Heart left ventricle (tissue), 16 donors: ENCODE measurements at regions of chr9 and their contacts with region 1.

Region 1: DNA sequence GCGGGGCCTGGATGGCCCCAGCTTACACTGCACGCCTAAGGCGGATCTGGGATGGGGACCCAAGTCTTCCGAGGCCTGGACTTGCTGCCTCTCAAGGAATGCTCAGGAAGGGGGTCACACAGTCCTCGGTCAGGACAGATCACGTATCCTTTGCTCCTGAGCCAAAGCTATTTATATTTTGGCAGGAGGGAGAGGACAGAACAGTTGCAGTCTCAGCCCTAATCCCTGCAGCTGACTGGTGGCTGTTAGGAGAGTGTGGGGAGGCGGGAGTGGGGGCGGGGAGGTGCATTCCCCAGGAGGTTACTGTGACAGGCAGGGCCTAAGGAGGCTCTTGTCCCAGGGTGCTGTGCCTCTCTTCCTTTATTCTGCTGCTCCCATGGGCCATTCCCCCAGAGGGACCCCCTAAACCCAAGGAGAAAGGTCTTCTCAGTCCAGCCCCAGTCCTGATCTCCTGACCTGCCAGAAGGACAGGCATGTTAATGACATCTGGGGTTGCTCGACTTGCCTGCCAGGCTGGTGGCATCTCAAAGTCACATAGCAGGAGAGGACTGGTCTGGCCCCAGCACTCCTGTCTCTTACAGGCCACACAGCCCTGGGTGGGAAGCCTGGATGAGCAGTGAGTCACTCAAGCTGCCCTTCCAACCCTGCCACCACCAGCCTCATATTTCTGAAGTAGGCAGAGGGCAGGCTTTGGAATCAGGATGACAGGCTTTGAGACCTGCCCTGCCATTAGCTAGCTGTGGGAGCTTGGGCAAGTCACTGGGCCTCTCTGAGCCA is 51.9 kb downstream of the COL27A1 start:
- DNase-seq: peak; percentile 75 to 86 (median 79)
- ATAC-seq: peak; percentile 89 to 97 (median 91)
- H3K4me3 ChIP-seq: no peak overlapping the region
- H3K27ac ChIP-seq: peak overlapping the region; percentile 35 to 94 (median 81)
- H3K4me1 ChIP-seq: peaks cover 4 to 47% (median 28%) of the 10 kb centered on the region in 12 donors
- H3K27me3 ChIP-seq: no peaks in the 10 kb centered on the region
- CTCF ChIP-seq: no peak
- POLR2A ChIP-seq: no peak

Region 2: DNA sequence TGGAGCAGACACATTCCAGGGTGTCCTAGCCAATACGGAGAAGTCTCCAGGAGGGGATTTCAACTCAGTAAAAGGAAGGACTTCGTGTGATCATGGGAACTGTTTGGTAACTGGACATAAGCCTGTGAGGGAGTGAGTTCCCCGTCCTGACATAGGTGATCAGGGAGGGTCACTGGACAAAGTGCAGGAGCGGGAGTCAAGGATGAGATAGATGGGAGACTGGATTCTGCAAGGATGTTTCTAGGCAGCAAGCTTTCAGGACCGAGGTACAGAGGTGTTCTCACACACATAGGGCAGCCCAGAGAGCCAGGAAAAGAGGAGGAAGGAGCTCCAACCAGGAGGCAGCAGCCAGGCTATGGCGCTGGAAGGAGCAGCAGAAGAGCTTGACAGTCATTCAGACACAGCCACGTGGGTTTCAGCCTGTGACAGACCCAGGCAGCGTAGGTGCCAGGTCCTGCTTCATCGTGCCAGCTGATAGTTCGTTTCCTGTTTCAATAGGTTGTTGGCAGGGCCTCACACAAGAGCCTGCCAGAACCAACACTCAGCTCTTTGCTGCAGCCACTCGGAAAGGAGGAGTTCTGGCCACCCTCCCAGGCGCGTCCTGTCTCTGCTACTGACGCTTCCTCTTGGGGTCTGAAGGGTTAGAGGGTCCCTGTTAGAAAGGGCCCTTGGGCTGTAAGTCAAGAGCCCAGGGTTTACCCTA is 213.2 kb before region 1 on chr9:
- intact Hi-C with region 1: no loop called
- DNase-seq: peak; percentile 86 to 93 (median 86)
- ATAC-seq: peak; percentile 89 to 92 (median 90)
- H3K4me3 ChIP-seq: no peak overlapping the region
- H3K27ac ChIP-seq: peak overlapping the region in 2 of 12 donors; percentile 34 to 56
- H3K4me1 ChIP-seq: peaks cover 8 to 61% (median 38%) of the 10 kb centered on the region in 12 donors
- H3K27me3 ChIP-seq: no peaks in the 10 kb centered on the region
- CTCF ChIP-seq: no peak
- POLR2A ChIP-seq: no peak

Region 3: DNA sequence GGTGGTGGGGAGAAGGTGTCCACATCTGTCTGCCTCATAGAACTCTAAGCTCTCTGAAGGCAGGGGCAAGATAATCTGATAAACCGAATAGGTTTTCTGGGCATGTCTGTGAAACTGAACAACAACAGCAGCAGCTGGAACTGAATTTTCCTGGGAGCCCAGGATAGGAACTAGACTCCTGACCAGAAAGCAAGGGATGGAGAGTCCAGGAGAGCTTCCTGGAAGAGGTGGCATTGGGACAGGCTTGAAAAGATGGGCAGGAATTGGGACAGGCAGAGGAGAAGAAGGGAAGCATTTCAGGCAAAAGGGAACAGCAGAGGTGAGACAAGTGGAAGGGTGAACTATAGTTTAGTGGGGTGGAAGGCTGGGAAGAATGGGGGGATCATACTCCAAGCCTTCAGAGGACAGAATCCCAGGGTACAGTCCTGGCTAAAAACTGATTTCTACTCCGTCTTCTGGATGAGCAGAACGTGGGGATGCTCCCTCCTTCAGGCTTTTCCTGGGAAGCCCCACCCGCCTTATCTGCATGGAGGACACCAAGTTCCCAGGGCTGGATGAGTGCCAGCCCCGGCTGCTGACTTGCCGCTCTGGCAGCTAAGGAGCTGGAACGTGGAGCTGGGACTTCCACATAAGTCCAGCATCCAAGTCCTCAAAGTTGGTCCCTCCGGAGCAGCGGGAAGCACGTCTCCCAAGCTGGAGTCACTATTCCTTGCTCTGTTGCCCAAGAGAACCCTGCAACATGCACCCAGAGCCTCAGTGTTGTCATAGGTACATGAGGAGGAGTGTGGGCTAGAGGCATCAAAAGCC is 94.2 kb before region 1 on chr9:
- intact Hi-C with region 1: no loop called
- DNase-seq: peak; percentile 76 to 92 (median 90)
- ATAC-seq: peak; percentile 71 to 80 (median 75)
- H3K4me3 ChIP-seq: no peak overlapping the region
- H3K27ac ChIP-seq: peak overlapping the region in 9 of 12 donors; percentile 7 to 64 (median 41)
- H3K4me1 ChIP-seq: peaks cover 0 to 20% (median 12%) of the 10 kb centered on the region in 12 donors
- H3K27me3 ChIP-seq: peaks cover 0 to 7% (median 0%) of the 10 kb centered on the region in 9 donors
- CTCF ChIP-seq: no peak
- POLR2A ChIP-seq: no peak

Region 4: DNA sequence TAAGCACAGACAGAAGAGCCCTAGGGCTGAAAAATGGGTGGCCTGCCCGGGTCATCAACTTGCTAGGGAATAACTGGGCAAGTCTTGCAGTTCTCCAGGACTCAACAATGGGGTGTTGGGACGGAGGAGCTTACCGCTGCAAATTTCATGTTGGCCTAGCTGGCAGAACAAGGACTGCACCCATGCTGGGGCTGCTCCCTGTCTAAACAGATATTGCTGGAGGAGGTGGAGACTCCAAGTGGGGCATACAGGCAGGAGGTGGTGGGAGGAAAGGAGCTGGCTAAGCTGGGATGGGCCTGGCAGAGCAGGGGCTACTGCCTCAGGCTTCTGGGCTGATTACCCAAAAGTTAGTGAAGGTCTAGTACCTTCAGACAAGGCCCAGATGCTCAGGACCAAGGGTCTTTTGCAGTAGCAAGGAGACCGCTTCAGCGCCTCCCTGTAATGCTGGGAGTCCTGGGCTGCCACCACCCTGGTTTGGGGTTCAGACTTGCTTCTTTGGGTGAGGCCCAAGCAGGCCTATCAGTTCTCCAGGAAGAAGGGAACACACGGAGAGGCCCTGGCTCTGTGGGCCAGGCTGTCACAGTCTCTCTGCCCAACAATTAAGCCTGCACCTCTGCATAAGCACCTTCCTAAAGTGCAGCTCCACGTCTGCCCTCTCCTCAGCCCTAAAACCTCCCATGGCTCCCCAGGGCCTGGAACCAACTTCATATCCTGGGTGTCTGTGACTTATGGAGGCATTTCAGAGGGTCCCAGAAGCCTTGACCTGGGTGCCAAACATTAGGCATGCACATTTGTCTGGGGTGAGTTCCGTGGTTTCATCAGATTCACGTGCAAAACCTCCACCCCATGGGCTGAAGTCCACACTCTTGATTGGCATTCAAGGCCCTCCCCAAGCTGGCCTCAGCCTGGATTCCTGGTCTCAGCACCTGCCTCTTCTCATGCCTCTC is 83.9 kb before region 1 on chr9:
- intact Hi-C with region 1: no loop called
- DNase-seq: no peak
- ATAC-seq: no peak
- H3K4me3 ChIP-seq: no peak overlapping the region
- H3K27ac ChIP-seq: no peak overlapping the region
- H3K4me1 ChIP-seq: peaks cover 0 to 14% (median 0%) of the 10 kb centered on the region in 12 donors
- H3K27me3 ChIP-seq: peaks cover 0 to 4% (median 0%) of the 10 kb centered on the region in 9 donors
- CTCF ChIP-seq: no peak
- POLR2A ChIP-seq: no peak

Region 5: DNA sequence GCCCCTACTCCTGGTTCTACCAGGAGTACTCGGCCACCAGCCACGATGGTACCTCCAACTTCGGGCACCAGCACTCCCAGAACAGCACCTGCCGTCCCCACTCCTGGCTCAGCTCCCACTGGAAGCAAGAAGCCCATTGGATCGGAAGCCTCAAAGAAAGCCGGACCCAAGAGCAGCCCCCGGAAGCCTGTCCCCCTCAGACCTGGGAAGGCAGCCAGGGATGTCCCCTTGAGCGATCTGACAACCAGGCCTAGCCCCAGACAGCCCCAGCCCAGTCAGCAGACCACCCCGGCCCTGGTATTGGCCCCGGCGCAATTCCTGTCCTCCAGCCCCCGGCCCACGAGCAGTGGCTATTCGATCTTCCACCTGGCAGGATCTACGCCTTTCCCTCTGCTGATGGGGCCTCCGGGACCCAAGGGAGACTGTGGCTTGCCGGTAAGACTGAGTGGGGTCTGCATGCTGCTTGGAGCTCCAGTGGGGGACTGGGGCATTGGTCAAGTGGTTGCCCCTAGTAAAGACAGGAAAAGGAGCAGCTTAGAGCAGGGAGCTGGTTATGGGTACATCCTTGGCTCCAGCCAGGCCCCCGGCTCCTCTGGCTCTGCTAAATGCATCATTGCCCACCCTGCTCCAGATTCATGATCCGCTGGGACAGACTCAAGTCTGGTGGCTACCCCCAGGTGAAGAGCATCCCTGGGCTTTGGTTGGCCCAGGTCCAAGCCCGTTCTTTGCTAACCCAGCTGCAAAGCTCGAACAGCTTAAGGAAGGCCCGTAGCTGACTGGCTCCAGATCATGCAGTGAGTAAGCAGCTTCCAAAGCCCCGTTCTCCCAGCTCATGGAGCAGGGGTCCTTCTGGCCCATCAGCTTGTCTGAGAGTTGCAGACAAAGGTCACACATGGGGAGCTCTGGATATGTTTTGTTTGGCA is 37.9 kb before region 1 on chr9:
- intact Hi-C with region 1: loop called in 1 of 10 experiments (anchors 5 kb)
- DNase-seq: peak in 2 of 5 donors; percentile 40 to 54
- ATAC-seq: peak in 3 of 4 donors; percentile 23 to 38 (median 24)
- H3K4me3 ChIP-seq: no peak overlapping the region
- H3K27ac ChIP-seq: peak overlapping the region in 4 of 12 donors; percentile 17 to 46 (median 24)
- H3K4me1 ChIP-seq: peaks cover 0 to 37% (median 9%) of the 10 kb centered on the region in 12 donors
- H3K27me3 ChIP-seq: no peaks in the 10 kb centered on the region
- CTCF ChIP-seq: no peak
- POLR2A ChIP-seq: no peak

Region 6: DNA sequence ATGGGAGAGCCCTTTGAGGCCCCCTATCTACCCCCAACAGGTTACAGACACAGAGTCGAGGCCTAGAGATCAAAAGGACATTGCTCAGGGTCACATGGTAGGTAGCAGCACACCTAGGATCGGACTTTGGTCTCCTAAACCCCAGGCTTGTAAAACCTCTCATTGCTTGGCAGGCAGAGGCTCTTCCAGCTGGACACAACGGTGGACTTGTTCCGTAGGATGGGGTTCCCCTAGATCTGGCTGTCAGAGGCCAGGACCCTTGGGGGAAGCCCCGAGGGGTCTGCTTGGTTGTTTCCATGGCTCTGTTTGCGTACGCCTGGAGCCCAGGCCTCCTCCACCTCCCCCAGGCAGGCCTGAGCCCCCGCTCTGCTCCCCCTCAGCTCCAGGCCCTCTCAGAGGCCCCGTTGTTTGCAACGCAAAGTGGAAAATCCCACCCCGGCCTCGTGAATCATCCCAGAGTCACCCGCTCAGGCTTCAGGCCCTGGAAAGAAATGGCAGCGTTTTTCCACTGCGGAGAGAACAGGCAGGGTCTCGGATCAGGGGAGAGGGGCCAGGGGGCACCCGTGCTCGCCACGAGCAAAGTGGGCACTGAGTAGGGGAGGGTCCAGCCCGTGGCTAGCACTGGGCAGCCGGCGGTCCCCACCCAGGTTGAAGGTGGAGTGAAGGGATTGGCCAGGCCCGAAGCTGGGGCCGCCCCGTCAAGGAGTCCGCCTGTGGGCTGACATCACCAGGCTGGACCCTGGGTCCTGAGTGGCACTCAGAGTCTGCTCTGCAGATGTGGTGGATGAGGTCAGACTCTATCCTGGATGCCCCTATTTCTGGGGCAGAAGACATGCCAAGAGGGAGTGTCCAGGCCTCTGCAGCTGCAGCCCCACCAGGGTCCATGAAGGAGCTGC is 32.1 kb before region 1 on chr9:
- intact Hi-C with region 1: loop called in 1 of 10 experiments (anchors 2 kb)
- DNase-seq: peak in 4 of 5 donors; percentile 67 to 83 (median 75)
- ATAC-seq: peak; percentile 68 to 79 (median 78)
- H3K4me3 ChIP-seq: no peak overlapping the region
- H3K27ac ChIP-seq: peak overlapping the region; percentile 9 to 92 (median 84)
- H3K4me1 ChIP-seq: peaks cover 3 to 79% (median 57%) of the 10 kb centered on the region in 12 donors
- H3K27me3 ChIP-seq: no peaks in the 10 kb centered on the region
- CTCF ChIP-seq: no peak
- POLR2A ChIP-seq: no peak

Region 7: GRCh38 chr9:114238891-114239875 is 32.0 kb after region 1 on chr9:
- intact Hi-C with region 1: loop called in 1 of 10 experiments (anchors 5 kb)
- DNase-seq: peak in 4 of 5 donors; percentile 47 to 66 (median 56)
- ATAC-seq: peak; percentile 54 to 79 (median 68)
- H3K4me3 ChIP-seq: no peak overlapping the region
- H3K27ac ChIP-seq: peak overlapping the region in 8 of 12 donors; percentile 20 to 74 (median 54)
- H3K4me1 ChIP-seq: peaks cover 0 to 46% (median 27%) of the 10 kb centered on the region in 12 donors
- H3K27me3 ChIP-seq: no peaks in the 10 kb centered on the region
- CTCF ChIP-seq: peak in 10 of 12 donors; percentile 17 to 62 (median 34)
- POLR2A ChIP-seq: no peak

Region 8: DNA sequence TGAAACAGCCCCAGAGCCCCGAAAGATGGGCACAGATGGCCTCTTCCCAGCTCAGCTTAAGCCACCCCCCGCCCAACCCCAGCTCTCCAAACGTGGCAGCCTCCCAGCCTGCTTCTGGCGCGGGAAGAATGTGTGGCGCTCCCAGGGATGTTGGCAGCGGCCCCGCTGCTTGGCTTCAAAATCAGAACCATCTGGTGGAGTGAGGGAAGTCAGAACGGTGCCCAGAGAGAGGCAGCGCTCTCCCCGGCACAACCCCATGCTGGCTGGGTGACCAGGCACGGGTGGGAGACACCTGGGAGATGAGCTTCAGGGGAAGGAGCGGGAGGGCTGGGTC is 43.0 kb after region 1 on chr9:
- intact Hi-C with region 1: loop called in 2 of 10 experiments (anchors 1 to 5 kb)
- DNase-seq: peak; percentile 77 to 92 (median 81)
- ATAC-seq: peak; percentile 91 to 95 (median 92)
- H3K4me3 ChIP-seq: peak overlapping the region in 2 of 12 donors; percentile 2 to 5
- H3K27ac ChIP-seq: peak overlapping the region in 10 of 12 donors; percentile 6 to 75 (median 65)
- H3K4me1 ChIP-seq: peaks cover 0 to 28% (median 6%) of the 10 kb centered on the region in 12 donors
- H3K27me3 ChIP-seq: no peaks in the 10 kb centered on the region
- CTCF ChIP-seq: no peak
- POLR2A ChIP-seq: no peak